Activated CD4-positive, alpha-beta T cell treated with anti-CD3 and anti-CD28 coated beads for 36 hours (primary cell): ENCODE measurements at regions of chr2 and their contacts with region 1.

Region 1: GRCh38 chr2:208280933-208281332 is 14.9 kb downstream of the PIKFYVE start:
- DNase-seq: no peak
- ATAC-seq: peak; percentile 81
- H3K4me3 Mint-ChIP-seq: no peak overlapping the region
- H3K27ac Mint-ChIP-seq: no peak overlapping the region
- H3K4me1 Mint-ChIP-seq: peaks cover 26% of the 10 kb centered on the region
- H3K27me3 Mint-ChIP-seq: no peaks in the 10 kb centered on the region

Region 2: DNA sequence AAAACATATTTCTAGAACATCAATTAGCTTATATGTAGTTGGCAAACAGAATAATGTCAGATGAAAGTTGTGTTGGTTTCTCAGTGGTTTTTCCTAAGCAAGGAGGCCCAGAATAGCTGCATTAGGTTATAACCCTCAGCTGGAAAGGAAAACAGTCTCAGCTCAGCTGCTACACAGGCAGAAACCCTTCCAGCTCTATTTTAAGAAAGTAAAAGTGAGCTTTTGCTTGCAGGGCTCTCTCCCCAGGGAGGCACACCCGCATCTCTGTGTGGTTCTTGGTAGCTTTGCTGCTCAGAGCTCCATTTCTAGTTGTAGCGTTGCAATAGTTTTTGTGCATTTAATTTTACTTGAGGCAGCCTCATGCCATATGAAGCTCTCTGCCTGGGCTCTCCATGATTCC is 39.8 kb after region 1 on chr2:
- CTCF ChIA-PET with region 1: no interaction called
- POLR2A ChIA-PET with region 1: no interaction called
- intact Hi-C with region 1: loop called in 1 of 2 experiments (anchors 1 kb)
- DNase-seq: no peak
- ATAC-seq: no peak
- H3K4me3 Mint-ChIP-seq: no peak overlapping the region
- H3K27ac Mint-ChIP-seq: no peak overlapping the region
- H3K4me1 Mint-ChIP-seq: peaks cover 8% of the 10 kb centered on the region
- H3K27me3 Mint-ChIP-seq: no peaks in the 10 kb centered on the region

Region 3: DNA sequence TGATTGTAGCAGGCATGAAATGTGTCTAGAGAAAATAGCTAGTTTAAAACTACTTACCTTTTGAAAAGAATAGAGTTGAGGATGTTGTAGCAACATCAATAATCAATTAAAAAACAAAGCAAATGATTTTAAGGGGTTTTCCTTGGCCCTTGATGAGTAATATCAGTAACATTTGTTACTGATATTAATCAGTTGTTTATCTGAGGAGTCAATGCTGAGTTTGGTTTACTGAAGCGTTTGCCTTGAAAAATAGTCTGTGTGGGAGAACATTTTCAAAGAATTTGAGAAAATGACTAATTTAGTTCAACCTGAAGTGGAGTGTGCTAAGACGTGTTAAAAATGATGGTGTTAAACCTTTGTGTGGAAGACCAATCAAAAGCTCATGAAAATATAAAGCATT is 135.0 kb after region 1 on chr2:
- CTCF ChIA-PET with region 1: no interaction called
- POLR2A ChIA-PET with region 1: no interaction called
- intact Hi-C with region 1: no loop called
- DNase-seq: no peak
- ATAC-seq: peak; percentile 49
- H3K4me3 Mint-ChIP-seq: no peak overlapping the region
- H3K27ac Mint-ChIP-seq: no peak overlapping the region
- H3K4me1 Mint-ChIP-seq: no peaks in the 10 kb centered on the region
- H3K27me3 Mint-ChIP-seq: peaks cover 8% of the 10 kb centered on the region